Naive thymus-derived CD4-positive, alpha-beta T cell (primary cell): ENCODE measurements at regions of chr16 and their contacts with region 1.

Region 1: GRCh38 chr16:56281256-56281805 is 90.0 kb downstream of the GNAO1 start:
- DNase-seq: no peak
- ATAC-seq: no peak
- H3K4me3 ChIP-seq: no peak overlapping the region
- H3K4me3 Mint-ChIP-seq: no peak overlapping the region
- H3K27ac ChIP-seq: no peak overlapping the region
- H3K27ac Mint-ChIP-seq: peak overlapping the region in 1 of 9 donors; percentile 62
- H3K4me1 ChIP-seq: peaks cover 0 to 29% of the 10 kb centered on the region in 2 donors
- H3K4me1 Mint-ChIP-seq: peaks cover 7 to 30% (median 13%) of the 10 kb centered on the region in 7 donors
- H3K27me3 ChIP-seq: no peaks in the 10 kb centered on the region
- H3K27me3 Mint-ChIP-seq: peaks cover 0 to 3% (median 0%) of the 10 kb centered on the region in 5 donors

Region 2: GRCh38 chr16:55944377-55944802 is 336.9 kb before region 1 on chr16:
- CTCF ChIA-PET with region 1: no interaction called
- POLR2A ChIA-PET with region 1: no interaction called
- intact Hi-C with region 1: loop called in 1 of 2 experiments (anchors 1 kb)
- DNase-seq: peak in 6 of 9 donors; percentile 11 to 49 (median 24)
- ATAC-seq: peak; percentile 66
- H3K4me3 ChIP-seq: no peak overlapping the region
- H3K4me3 Mint-ChIP-seq: no peak overlapping the region
- H3K27ac ChIP-seq: no peak overlapping the region
- H3K27ac Mint-ChIP-seq: no peak overlapping the region
- H3K4me1 ChIP-seq: no peaks in the 10 kb centered on the region
- H3K4me1 Mint-ChIP-seq: peaks cover 0 to 3% (median 0%) of the 10 kb centered on the region in 7 donors
- H3K27me3 ChIP-seq: no peaks in the 10 kb centered on the region
- H3K27me3 Mint-ChIP-seq: peaks cover 42 to 53% (median 47%) of the 10 kb centered on the region in 5 donors

Region 3: GRCh38 chr16:56262148-56262547 is 19.2 kb before region 1 on chr16:
- CTCF ChIA-PET with region 1: no interaction called
- POLR2A ChIA-PET with region 1: no interaction called
- intact Hi-C with region 1: no loop called
- DNase-seq: peak in 4 of 9 donors; percentile 3 to 26 (median 10)
- ATAC-seq: peak; percentile 81
- H3K4me3 ChIP-seq: peak overlapping the region; percentile 31
- H3K4me3 Mint-ChIP-seq: peak overlapping the region in 9 of 10 donors; percentile 5 to 81 (median 48)
- H3K27ac ChIP-seq: no peak overlapping the region
- H3K27ac Mint-ChIP-seq: peak overlapping the region in 7 of 9 donors; percentile 3 to 81 (median 21)
- H3K4me1 ChIP-seq: peaks cover 8 to 37% of the 10 kb centered on the region in 2 donors
- H3K4me1 Mint-ChIP-seq: peaks cover 15 to 38% (median 23%) of the 10 kb centered on the region in 7 donors
- H3K27me3 ChIP-seq: no peaks in the 10 kb centered on the region
- H3K27me3 Mint-ChIP-seq: peaks cover 0 to 5% (median 0%) of the 10 kb centered on the region in 5 donors